Gastrocnemius medialis (tissue), 4 donors: ENCODE measurements at regions of chr17 and their contacts with region 1.

Region 1: GRCh38 chr17:36657763-36658490 is 56.5 kb downstream of the MRM1 start:
- DNase-seq: no peak
- ATAC-seq: no peak
- H3K4me3 ChIP-seq: peak overlapping the region; percentile 33 to 50 (median 44)
- H3K27ac ChIP-seq: no peak overlapping the region
- H3K4me1 ChIP-seq: no peaks in the 10 kb centered on the region
- H3K27me3 ChIP-seq: peaks cover 34 to 66% (median 47%) of the 10 kb centered on the region in 3 donors
- CTCF ChIP-seq: no peak
- POLR2A ChIP-seq: no peak

Region 2: DNA sequence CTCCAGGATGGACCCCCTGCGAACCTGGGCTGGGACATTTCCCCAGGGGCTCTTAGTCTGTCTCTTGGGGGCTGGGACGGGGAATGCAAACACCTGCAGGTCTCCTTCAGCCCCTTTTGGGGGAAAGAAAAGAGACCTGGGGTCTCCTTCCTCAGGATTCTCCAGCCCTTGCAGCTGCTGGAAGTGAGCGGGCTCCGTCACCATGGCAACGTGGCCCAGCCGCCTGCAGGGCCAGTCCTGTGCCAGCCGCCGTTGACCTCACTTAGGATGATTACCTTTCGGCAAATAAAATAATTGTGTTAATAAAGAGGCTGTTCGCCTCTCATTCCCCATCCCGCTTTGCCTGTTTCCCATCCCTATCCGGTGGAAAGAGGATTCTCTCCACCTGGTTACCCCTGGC is 30.8 kb before region 1 on chr17:
- in situ Hi-C with region 1: no loop called
- intact Hi-C with region 1: no loop called
- DNase-seq: no peak
- ATAC-seq: no peak
- H3K4me3 ChIP-seq: no peak overlapping the region
- H3K27ac ChIP-seq: no peak overlapping the region
- H3K4me1 ChIP-seq: peaks cover 0 to 2% of the 10 kb centered on the region in 2 donors
- H3K27me3 ChIP-seq: peaks cover 0 to 2% (median 0%) of the 10 kb centered on the region in 3 donors
- CTCF ChIP-seq: no peak
- POLR2A ChIP-seq: no peak

Region 3: GRCh38 chr17:36689089-36689667 is 31.3 kb after region 1 on chr17:
- in situ Hi-C with region 1: no loop called
- intact Hi-C with region 1: no loop called
- DNase-seq: no peak
- ATAC-seq: no peak
- H3K4me3 ChIP-seq: no peak overlapping the region
- H3K27ac ChIP-seq: no peak overlapping the region
- H3K4me1 ChIP-seq: no peaks in the 10 kb centered on the region
- H3K27me3 ChIP-seq: peaks cover 0 to 7% (median 3%) of the 10 kb centered on the region in 3 donors
- CTCF ChIP-seq: no peak
- POLR2A ChIP-seq: no peak

Region 4: GRCh38 chr17:36705874-36706731 is 48.2 kb after region 1 on chr17:
- in situ Hi-C with region 1: no loop called
- intact Hi-C with region 1: no loop called
- DNase-seq: peak in 1 of 2 donors; percentile 26
- ATAC-seq: no peak
- H3K4me3 ChIP-seq: no peak overlapping the region
- H3K27ac ChIP-seq: no peak overlapping the region
- H3K4me1 ChIP-seq: no peaks in the 10 kb centered on the region
- H3K27me3 ChIP-seq: peaks cover 10 to 35% (median 18%) of the 10 kb centered on the region in 3 donors
- CTCF ChIP-seq: peak in 4 of 5 experiments; percentile 22 to 52 (median 30)
- POLR2A ChIP-seq: no peak

Region 5: DNA sequence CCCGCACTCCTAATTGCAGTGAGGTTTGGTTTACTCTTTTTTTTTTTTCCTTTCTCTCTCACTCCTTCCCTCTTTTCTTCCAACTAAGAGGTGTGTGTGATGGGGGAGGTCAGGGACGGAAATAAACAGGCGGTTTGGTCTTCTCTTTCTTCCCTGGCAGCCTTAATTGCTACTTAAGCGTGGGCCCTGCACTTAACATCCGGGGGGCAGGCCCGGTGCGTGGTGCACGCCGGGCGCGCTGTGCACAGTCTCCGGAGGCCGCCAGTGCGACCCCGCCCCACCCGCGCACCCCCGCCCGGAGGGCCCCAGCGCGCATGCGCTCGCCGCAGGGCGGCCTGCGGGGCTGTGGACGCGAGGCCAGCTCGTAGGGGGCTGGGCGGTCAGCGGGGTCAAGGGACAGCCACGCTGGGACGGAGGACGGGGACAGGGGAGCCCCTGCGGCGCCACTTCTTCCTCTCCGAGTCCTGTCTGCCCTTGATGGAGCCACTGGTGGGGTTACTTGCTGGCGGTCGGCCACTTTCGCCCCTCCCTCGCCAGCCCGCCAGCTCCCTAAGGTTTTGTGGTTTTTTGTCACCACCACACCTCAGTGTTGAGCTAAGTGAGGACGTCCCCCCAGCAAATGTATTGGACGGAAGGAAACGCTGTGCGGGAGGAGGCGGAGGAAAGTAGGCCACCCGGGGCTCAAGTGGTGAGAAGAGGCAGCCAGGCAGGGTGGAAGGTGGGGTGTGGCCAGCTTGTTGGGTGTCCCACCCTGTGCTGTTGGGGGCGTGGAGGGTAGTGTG is 64.4 kb after region 1 on chr17:
- in situ Hi-C with region 1: no loop called
- intact Hi-C with region 1: no loop called
- DNase-seq: no peak
- ATAC-seq: no peak
- H3K4me3 ChIP-seq: peak overlapping the region; percentile 30 to 51 (median 40)
- H3K27ac ChIP-seq: no peak overlapping the region
- H3K4me1 ChIP-seq: no peaks in the 10 kb centered on the region
- H3K27me3 ChIP-seq: peaks cover 13 to 17% (median 16%) of the 10 kb centered on the region in 3 donors
- CTCF ChIP-seq: no peak
- POLR2A ChIP-seq: no peak

Region 6: GRCh38 chr17:36755586-36755985 is 97.7 kb after region 1 on chr17:
- in situ Hi-C with region 1: loop called in 1 of 4 experiments (anchors 25 kb)
- intact Hi-C with region 1: no loop called
- DNase-seq: no peak
- ATAC-seq: no peak
- H3K4me3 ChIP-seq: no peak overlapping the region
- H3K27ac ChIP-seq: no peak overlapping the region
- H3K4me1 ChIP-seq: no peaks in the 10 kb centered on the region
- H3K27me3 ChIP-seq: peaks cover 8 to 20% (median 12%) of the 10 kb centered on the region in 3 donors
- CTCF ChIP-seq: no peak
- POLR2A ChIP-seq: no peak